ENCODE measurements at regions of chr1 and their contacts with region 1.

Region 1: DNA sequence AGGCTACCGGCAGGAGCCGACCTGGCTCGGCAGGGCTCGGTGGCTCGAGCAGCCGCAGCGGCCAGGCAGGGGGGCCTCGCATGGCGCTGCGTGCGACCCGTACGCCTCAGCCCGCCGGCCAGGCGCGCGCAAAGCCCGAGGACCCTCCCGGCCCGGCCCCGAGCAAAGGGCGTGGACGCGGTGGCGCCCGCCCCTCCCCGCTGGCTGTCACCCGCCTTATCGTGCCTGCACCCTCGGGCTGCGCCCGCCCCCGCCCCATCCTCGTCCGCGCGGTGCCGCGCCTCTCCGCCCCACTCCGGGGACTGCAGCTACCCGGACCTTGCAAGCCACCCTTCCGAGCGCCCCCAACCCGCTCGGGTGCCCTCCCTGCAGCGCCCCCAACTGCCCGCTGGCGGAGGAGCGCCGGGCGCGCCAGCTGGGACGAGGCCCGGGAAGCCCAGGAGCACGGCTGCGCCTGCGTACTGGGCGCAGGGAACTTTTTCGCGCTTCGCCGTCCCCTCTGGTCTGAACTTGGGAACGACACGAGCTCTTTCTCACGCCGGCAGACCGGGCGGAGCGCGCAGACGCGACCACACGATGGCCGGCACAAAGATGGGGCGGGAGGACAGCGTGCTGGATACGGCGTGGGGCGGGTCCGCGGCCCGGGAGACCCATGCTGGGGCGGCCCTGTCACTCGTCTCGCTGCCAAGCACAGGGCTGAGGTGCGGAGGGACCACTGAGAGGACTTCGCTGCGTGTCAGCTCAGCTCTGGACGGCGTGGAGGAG is at the start of gene ABCB10:
- DNase-seq: peak; percentile 98
- total RNA-seq, gene ABCB10: 11.0 TPM

Region 2: GRCh38 chr1:229596925-229597699 is 38.4 kb after region 1 on chr1:
- intact Hi-C with region 1: loop called (anchors 2 kb)
- DNase-seq: no peak

Region 3: DNA sequence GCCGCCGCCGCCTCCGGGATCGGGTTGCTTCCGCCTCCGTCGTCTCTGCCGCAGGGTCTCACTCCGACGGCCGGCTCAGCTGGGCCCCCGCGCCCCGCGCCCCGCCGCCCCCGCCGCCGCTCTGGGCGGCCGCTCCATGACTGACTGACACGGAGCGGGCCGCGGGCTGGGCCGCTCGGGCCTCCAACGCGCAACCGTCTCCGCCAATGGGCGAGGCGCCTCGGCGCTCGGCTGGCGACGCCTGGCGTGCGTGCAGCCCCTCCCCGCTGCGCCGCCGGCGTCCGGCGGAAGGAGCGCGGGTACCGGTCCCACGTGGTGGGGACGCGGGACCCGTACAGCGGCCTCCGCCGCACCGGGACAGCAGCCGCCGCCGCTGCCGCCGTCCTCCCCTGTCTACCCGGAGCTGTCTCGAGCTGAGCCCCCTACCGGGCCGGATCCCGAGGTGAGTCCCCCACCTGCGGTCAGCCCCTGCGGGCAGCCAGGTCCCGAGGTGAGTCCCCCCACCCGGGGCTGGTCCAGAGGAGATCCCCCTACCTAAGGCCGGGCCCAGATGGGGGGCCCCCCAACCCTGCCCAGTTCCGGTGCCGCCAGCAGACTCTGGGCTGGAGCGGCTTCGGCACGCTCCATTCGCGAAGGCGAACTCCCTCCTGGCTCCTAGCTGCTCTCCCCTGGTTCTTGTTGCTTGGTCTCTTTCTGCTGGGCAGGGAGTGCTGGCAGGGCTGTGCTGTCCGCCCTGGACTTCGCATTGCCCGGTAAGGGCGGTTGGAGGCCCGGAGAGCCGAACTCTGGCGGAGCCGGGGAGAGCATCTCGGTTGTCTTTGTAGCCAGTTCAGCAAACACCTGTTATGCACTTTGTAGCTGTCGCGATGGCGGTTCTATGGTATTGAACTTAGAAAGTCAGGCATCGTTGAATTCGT is 67.4 kb after region 1 on chr1 and contains the starts of genes TAF5L and URB2:
- intact Hi-C with region 1: loop called (anchors 1 kb)
- DNase-seq: peak; percentile 95
- total RNA-seq, gene TAF5L: 12.5 TPM
- total RNA-seq, gene URB2: 5.5 TPM